H1 (cell line): ENCODE measurements at regions of chr1 and their contacts with region 1.

Region 1: GRCh38 chr1:169601093-169601881 is 15.0 kb upstream of the F5 start:
- DNase-seq: no peak
- H3K4me3 ChIP-seq: no peak overlapping the region
- H3K27ac ChIP-seq: no peak overlapping the region
- H3K4me1 ChIP-seq: no peaks in the 10 kb centered on the region
- H3K27me3 ChIP-seq: no peaks in the 10 kb centered on the region
- CTCF ChIP-seq: peak in 2 of 3 experiments; percentile 46 to 49; a peak in 2 of 4 replicates
- EP300 ChIP-seq: no peak
- POLR2A ChIP-seq: no peak
- RAD21 ChIP-seq: peak; percentile 74 to 75

Region 2: GRCh38 chr1:169511316-169512028 is 89.8 kb before region 1 on chr1:
- CTCF ChIA-PET with region 1: no interaction called
- POLR2A ChIA-PET with region 1: no interaction called
- DNase-seq: no peak
- H3K4me3 ChIP-seq: no peak overlapping the region
- H3K27ac ChIP-seq: no peak overlapping the region
- H3K4me1 ChIP-seq: no peaks in the 10 kb centered on the region
- H3K27me3 ChIP-seq: no peaks in the 10 kb centered on the region
- CTCF ChIP-seq: no peak
- EP300 ChIP-seq: no peak
- POLR2A ChIP-seq: no peak
- RAD21 ChIP-seq: no peak

Region 3: GRCh38 chr1:169538998-169539871 is 62.1 kb before region 1 on chr1:
- CTCF ChIA-PET with region 1: no interaction called
- POLR2A ChIA-PET with region 1: no interaction called
- DNase-seq: no peak
- H3K4me3 ChIP-seq: no peak overlapping the region
- H3K27ac ChIP-seq: no peak overlapping the region
- H3K4me1 ChIP-seq: no peaks in the 10 kb centered on the region
- H3K27me3 ChIP-seq: no peaks in the 10 kb centered on the region
- CTCF ChIP-seq: no peak
- EP300 ChIP-seq: no peak
- POLR2A ChIP-seq: no peak
- RAD21 ChIP-seq: no peak

Region 4: DNA sequence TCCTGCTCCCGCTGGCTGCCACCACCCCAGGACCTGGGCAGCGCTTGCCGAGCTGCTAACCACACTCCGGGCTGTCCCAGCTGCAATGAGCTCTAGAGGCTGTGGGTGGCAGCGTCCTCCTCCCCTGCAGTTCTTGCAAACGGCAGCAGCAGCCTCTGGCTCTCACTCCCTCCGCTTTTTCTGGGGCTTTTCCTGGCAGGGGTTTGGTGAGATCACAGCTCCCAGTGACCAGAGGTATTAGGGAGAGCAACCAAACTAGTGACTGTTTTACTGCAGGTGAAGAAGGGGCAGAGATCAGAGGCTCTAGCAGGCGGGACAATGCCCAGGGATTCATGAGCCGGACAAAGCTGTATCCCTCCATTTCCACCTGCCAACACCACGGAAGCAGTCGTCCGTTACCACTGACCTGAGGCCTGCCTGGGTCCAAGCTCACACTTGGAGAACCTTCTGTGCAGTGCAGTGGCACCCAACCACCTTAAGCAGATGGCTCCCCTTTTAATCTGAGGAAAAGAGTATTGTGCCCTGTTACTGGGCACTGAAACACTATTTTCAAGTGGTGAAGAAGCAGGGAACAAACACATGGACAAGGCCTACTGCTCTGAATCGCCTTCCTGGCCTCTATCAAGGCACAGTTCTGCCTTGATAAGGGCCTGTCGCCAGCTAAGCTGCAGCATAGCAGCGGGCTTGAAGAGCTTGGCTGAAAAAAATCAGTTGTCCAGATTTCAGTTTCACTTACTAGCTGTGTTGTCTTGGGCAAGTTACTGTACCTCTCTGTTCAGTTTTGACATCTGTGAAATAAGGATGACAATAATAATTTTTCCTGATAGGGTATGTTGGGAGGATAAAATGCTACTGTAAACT is 14.7 kb before region 1 on chr1 and contains the start of gene F5:
- CTCF ChIA-PET with region 1: interaction called, 13 read pairs
- POLR2A ChIA-PET with region 1: interaction called, 6 read pairs
- DNase-seq: peak; percentile 76 to 77
- H3K4me3 ChIP-seq: peak within 1 kb of the TSS in 1 of 4 experiments; percentile 42; a peak in 3 of 8 replicates
- H3K27ac ChIP-seq: no peak within 1 kb of the TSS
- H3K4me1 ChIP-seq: peaks cover 0 to 2% (median under 1%) of the 10 kb centered on the region in 4 experiments; a peak in 3 of 7 replicates
- H3K27me3 ChIP-seq: no peaks in the 10 kb centered on the region; a peak in 1 of 7 replicates
- CTCF ChIP-seq: peak; percentile 72 to 79 (median 72)
- EP300 ChIP-seq: peak in 1 of 2 experiments; percentile 58; a peak in 1 of 3 replicates
- POLR2A ChIP-seq: no peak
- RAD21 ChIP-seq: peak; percentile 82 to 84
- total RNA-seq, gene F5: 0.04 TPM in 1 of 2 replicates, not detected in the other

Region 5: DNA sequence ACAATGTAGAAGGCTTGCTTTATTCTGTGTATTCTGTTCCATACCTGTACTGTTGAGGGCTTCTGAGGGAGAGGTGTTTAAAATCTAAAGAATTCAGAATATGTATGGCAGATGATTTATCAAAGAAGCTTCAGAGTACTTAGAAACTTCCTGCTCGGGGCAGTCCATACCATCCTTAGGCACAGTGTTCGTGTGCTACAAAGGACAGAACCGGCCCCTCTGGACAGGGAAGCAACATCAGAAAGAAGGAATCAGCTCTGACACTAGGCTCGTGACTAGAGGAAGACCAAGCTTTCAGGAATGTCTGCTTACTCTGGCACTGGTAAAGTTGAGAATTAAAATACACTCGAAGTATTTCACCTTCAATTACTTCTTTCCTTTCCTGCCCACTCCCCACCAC is 14.5 kb after region 1 on chr1:
- CTCF ChIA-PET with region 1: interaction called, 22 read pairs
- POLR2A ChIA-PET with region 1: no interaction called
- DNase-seq: no peak
- H3K4me3 ChIP-seq: no peak overlapping the region
- H3K27ac ChIP-seq: no peak overlapping the region
- H3K4me1 ChIP-seq: no peaks in the 10 kb centered on the region
- H3K27me3 ChIP-seq: no peaks in the 10 kb centered on the region
- CTCF ChIP-seq: no peak
- EP300 ChIP-seq: no peak
- POLR2A ChIP-seq: no peak
- RAD21 ChIP-seq: no peak

Region 6: GRCh38 chr1:169694304-169695075 is 93.2 kb after region 1 on chr1:
- CTCF ChIA-PET with region 1: interaction called, 28 read pairs
- POLR2A ChIA-PET with region 1: no interaction called
- DNase-seq: no peak
- H3K4me3 ChIP-seq: no peak overlapping the region
- H3K27ac ChIP-seq: no peak overlapping the region
- H3K4me1 ChIP-seq: peaks cover 0 to 12% (median 2%) of the 10 kb centered on the region in 4 experiments; a peak in 2 of 7 replicates
- H3K27me3 ChIP-seq: peaks cover 26 to 43% (median 40%) of the 10 kb centered on the region in 4 experiments
- CTCF ChIP-seq: no peak; a peak in 1 of 4 replicates
- EP300 ChIP-seq: no peak
- POLR2A ChIP-seq: no peak
- RAD21 ChIP-seq: peak; percentile 27 to 39; a peak in 3 of 4 replicates

Region 7: DNA sequence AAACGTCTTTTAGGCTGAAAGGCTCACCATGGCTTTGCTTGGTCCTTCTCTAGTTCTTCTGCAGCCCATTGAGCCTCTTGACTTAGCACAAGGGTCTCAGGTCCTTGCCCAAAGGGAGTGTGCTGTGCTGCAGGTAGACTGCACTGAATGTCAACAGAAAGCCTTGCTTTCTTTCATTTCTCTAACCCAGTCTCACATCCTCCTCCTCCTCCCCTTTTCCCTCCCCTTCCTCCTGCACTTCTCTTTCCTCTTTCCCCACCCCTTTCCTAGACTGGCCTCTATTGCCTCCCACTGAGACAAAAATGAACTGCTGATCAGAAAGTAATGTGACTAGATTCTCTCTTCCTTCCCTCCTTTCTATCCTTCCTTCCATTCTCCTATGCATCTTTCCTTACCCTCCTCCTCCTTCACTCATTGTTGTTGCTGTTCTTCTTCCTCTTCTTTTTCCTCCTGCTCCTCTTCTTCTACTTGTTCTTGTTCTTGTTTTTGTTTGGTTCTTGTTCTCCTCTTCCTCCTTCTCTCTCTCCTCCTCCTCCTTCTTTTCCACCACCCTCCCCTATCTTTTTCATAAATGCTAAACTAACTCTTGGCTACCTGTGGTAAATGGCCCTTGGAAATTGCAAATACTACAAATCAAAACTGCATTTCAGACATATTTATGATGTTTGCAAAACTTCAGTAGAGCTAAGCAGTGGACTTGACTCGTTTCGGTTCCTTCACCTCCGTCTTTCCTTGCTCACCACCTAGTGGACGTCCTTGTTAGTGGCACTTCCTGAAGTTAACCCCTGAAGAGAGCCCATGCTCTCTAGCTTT is 110.4 kb after region 1 on chr1 and contains the start of gene SELL:
- CTCF ChIA-PET with region 1: interaction called, 45 read pairs
- POLR2A ChIA-PET with region 1: no interaction called
- DNase-seq: peak; percentile 15 to 65
- H3K4me3 ChIP-seq: peak within 1 kb of the TSS in 1 of 4 experiments; percentile 40; a peak in 2 of 8 replicates
- H3K27ac ChIP-seq: no peak within 1 kb of the TSS
- H3K4me1 ChIP-seq: peaks cover 0 to 2% (median 0%) of the 10 kb centered on the region in 4 experiments; a peak in 1 of 7 replicates
- H3K27me3 ChIP-seq: no peaks in the 10 kb centered on the region
- CTCF ChIP-seq: peak; percentile 71 to 86 (median 86)
- EP300 ChIP-seq: no peak
- POLR2A ChIP-seq: no peak
- RAD21 ChIP-seq: peak; percentile 88 to 93
- total RNA-seq, gene SELL: not detected in 2 replicates

Region 8: GRCh38 chr1:169809370-169810095 is 208.2 kb after region 1 on chr1:
- CTCF ChIA-PET with region 1: interaction called, 27 read pairs
- POLR2A ChIA-PET with region 1: no interaction called
- DNase-seq: no peak
- H3K4me3 ChIP-seq: no peak overlapping the region
- H3K27ac ChIP-seq: no peak overlapping the region
- H3K4me1 ChIP-seq: no peaks in the 10 kb centered on the region
- H3K27me3 ChIP-seq: no peaks in the 10 kb centered on the region
- CTCF ChIP-seq: peak in 2 of 3 experiments; percentile 10 to 35; a peak in 2 of 4 replicates
- EP300 ChIP-seq: no peak
- POLR2A ChIP-seq: no peak
- RAD21 ChIP-seq: peak; percentile 58 to 62